ENCODE measurements at regions of chr1 and their contacts with region 1.

Region 1: DNA sequence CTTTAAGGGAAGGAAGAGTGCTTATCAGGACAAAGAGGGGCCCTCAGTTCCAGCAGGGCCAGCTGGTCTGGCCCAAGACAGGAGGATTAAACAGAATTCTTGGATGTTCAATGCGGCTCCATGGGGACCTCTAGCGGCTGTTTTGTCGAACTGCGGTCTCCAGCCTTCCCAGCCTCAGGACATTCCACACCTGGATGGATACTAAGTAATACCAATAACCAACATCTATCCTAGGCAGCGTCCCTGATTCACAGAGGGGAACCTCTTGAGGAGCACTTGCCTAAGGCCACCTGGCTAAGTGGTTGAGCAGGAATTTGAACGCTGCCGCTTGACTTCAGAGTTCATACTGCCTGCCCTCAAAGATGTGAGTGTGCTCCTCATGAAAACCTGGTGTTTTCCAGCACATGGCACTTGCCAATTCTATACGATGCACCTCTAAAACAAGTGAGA is 15.5 kb upstream of the CD247 start:
- DNase-seq: peak; percentile 72
- H3K4me3 ChIP-seq: no peak overlapping the region
- H3K27ac ChIP-seq: no peak overlapping the region
- H3K4me1 ChIP-seq: no peaks in the 10 kb centered on the region
- H3K27me3 ChIP-seq: no peaks in the 10 kb centered on the region
- CTCF ChIP-seq: peak; percentile 93

Region 2: DNA sequence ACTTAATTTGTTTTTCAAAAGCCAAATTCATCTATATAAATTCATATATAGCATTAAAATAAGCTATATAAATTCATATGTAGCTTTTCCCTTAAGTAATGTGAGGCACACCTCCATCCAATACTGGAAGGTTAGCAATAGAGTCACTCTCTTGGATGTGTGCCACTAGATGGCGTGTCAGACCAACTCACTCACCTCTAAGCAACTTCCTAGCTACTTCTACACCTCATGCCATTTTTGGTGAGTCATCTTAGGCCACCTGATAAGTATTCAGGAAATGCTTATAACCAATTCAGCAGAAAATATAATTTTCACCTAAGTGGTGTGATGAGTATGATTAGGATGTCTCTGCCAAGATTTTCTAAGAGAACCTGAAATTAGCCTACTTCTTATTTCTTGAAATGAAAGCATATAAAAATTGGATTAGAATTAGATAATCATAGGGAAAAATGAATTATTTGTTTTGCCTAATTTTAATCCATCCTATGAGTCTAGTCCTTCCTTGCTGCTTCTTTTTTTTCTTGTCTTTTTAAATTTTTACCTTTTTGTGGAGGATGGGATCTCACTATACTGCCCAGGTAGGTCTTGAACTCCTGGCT is 623.4 kb before region 1 on chr1:
- CTCF ChIA-PET with region 1: interaction called, 4 read pairs
- POLR2A ChIA-PET with region 1: no interaction called
- intact Hi-C with region 1: loop called (anchors 5 kb)
- DNase-seq: peak; percentile 83
- H3K4me3 ChIP-seq: no peak overlapping the region
- H3K27ac ChIP-seq: no peak overlapping the region
- H3K4me1 ChIP-seq: no peaks in the 10 kb centered on the region
- H3K27me3 ChIP-seq: peaks cover 33% of the 10 kb centered on the region
- CTCF ChIP-seq: peak; percentile 89

Region 3: GRCh38 chr1:167059045-167059808 is 474.6 kb before region 1 on chr1:
- CTCF ChIA-PET with region 1: no interaction called
- POLR2A ChIA-PET with region 1: no interaction called
- intact Hi-C with region 1: loop called (anchors 5 kb)
- DNase-seq: peak; percentile 84
- H3K4me3 ChIP-seq: no peak overlapping the region
- H3K27ac ChIP-seq: no peak overlapping the region
- H3K4me1 ChIP-seq: no peaks in the 10 kb centered on the region
- H3K27me3 ChIP-seq: no peaks in the 10 kb centered on the region
- CTCF ChIP-seq: peak; percentile 94

Region 4: DNA sequence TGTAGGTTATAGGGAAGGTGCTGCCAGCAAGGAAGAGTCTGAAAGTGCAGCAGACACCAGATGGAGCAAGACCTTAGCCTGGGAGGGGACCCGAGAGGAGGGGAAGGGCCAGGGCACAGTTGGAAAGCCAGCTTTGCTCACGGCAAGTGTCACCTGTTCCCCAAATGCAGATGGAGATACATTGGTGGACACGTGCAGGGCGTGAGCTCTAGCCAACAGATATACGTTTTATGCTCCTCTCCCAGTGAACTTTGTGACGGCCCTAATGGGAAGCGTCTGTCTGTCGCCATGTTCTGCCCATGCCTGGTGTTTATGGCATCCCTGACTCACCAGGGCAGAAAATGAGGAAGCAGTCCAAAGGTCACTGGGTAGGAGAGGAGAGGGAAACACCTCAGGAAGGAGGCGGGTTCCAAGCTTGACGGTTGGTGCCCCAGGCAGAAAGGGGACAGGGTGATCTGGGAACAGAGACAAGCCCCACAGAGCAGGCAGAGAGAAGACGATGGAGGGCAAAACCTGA is 451.3 kb before region 1 on chr1:
- CTCF ChIA-PET with region 1: no interaction called
- POLR2A ChIA-PET with region 1: no interaction called
- intact Hi-C with region 1: loop called (anchors 5 kb)
- DNase-seq: no peak
- H3K4me3 ChIP-seq: no peak overlapping the region
- H3K27ac ChIP-seq: no peak overlapping the region
- H3K4me1 ChIP-seq: no peaks in the 10 kb centered on the region
- H3K27me3 ChIP-seq: peaks cover 15% of the 10 kb centered on the region
- CTCF ChIP-seq: no peak

Region 5: DNA sequence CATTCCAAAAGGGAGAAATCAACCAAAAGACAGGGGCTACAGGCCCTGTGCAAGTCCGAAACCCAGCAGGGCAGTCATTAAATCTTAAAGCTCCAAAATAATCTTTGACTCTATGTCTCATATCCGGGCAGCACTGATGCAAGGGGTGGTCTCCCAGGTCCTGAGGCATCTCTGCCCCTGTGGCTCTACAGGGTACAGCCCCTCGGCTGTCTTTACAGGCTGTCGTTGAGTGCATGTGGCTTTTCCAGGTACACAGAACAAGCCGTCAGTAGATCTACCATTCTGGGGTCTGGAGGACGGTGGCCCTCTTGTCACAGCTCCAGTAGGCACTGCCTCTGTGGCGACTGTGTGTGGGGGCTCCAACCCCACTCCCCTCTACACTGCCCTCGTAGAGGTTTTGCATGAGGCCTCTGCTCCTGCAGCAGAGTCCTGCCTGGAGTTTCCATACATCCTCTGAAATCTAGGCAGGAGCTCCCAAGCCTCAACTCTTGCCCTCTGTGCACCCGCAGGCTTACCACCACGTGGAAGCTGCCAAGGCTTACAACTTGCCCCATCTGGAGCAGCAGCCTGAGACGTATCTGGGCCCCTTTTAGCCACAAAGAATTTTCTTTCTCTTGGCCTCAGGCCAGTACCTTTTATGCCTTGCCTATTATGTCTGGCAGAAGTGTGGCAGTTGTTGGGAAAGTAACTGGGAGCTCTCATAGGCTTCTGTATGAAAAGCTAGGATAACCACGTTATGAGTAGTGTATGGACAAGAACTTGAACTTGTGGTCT is 260.7 kb before region 1 on chr1:
- CTCF ChIA-PET with region 1: interaction called, 4 read pairs
- POLR2A ChIA-PET with region 1: no interaction called
- intact Hi-C with region 1: loop called (anchors 1 kb)
- DNase-seq: peak; percentile 72
- H3K4me3 ChIP-seq: no peak overlapping the region
- H3K27ac ChIP-seq: peak overlapping the region; percentile 40
- H3K4me1 ChIP-seq: peaks cover 61% of the 10 kb centered on the region
- H3K27me3 ChIP-seq: no peaks in the 10 kb centered on the region
- CTCF ChIP-seq: no peak

Region 6: DNA sequence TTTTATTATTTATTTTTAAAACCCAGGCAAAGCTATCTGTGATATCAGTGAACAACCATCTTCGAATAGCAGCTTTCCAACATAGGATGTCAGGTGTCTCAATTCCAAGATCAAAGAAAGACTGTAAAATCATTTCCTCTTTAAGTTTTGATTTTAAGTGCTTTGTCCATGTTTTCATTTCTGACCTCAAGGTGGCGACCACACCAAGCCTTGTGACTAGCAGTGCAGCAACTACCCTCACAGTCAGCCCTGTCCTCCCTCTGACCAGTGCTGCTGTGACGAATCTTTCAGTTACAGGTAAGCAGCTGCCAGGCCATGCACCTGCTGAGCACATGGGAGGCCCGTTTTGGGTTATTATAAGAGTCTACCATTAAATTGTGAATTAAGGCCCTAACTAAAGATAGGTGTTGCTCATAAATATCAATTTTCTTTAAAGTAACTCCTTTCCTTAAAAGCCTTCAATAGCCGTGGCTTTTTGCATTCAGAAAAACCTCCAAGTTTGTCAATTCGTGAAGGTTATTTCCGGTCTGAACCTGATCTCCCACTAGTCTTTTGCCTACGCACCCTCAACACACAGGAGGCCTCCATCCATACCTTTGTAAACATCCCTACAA is 132.5 kb before region 1 on chr1:
- CTCF ChIA-PET with region 1: no interaction called
- POLR2A ChIA-PET with region 1: no interaction called
- intact Hi-C with region 1: loop called (anchors 5 kb)
- DNase-seq: peak; percentile 27
- H3K4me3 ChIP-seq: no peak overlapping the region
- H3K27ac ChIP-seq: no peak overlapping the region
- H3K4me1 ChIP-seq: no peaks in the 10 kb centered on the region
- H3K27me3 ChIP-seq: no peaks in the 10 kb centered on the region
- CTCF ChIP-seq: peak; percentile 69

Region 7: DNA sequence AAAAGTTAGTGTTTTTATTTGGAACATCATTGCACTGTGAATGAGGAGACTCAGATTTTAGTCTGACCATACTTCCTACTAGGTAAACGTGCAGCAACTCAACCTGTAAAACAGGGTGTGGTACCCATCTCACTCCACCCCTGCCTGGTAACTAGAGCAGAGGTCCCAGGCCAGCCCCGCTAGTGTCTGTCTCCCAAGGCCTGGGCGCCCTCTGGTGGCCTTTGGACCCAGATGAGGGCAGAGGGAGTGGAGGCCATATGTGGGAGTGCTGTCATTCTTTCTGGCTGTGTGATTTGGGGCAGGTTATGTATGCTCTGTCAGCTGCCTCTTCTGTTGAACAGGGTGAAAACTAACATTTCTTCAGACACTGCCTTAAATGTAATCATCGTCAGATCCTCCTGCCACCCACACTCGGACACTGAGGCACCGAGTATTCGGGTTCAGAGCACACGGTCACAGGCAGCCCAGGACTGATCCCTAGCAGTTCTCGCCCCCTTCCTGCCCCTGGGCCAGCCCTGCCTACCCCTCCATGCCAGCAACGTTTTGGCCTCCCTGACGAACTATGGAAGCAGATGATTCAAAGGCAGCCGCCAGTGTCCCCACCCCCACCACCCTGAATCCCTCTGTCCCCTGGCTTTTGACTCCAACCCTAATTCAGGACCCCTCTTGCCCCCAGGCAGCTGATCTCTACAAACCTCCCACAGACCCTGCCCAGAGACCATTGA is 91.6 kb before region 1 on chr1:
- CTCF ChIA-PET with region 1: no interaction called
- POLR2A ChIA-PET with region 1: no interaction called
- intact Hi-C with region 1: loop called (anchors 10 kb)
- DNase-seq: peak; percentile 87
- H3K4me3 ChIP-seq: no peak overlapping the region
- H3K27ac ChIP-seq: no peak overlapping the region
- H3K4me1 ChIP-seq: peaks cover 4% of the 10 kb centered on the region
- H3K27me3 ChIP-seq: no peaks in the 10 kb centered on the region
- CTCF ChIP-seq: peak; percentile 86

Region 8: GRCh38 chr1:167775178-167775577 is 241.3 kb after region 1 on chr1:
- CTCF ChIA-PET with region 1: no interaction called
- POLR2A ChIA-PET with region 1: no interaction called
- intact Hi-C with region 1: no loop called
- DNase-seq: no peak
- H3K4me3 ChIP-seq: no peak overlapping the region
- H3K27ac ChIP-seq: no peak overlapping the region
- H3K4me1 ChIP-seq: no peaks in the 10 kb centered on the region
- H3K27me3 ChIP-seq: no peaks in the 10 kb centered on the region
- CTCF ChIP-seq: no peak